ENCODE measurements at regions of chr6 and their contacts with region 1.

Region 1: DNA sequence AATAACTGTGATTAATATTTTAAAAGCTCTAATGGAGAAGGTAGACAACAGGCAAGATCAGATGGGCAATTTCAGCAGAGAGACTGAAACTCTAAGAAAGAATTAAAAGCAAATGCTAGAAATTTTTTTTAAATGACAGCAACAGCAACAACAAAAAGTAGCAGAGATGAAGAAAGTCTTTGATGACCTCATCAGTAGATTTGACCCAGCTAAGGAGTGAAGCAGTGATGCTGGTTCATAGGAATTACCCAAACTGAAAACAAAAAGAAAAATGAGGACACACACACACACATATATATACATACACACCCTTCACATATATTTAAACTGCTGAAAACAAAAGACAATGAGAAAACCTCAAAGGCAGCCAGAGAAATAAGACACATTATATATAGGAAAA is 197.6 kb upstream of the ARID1B start:
- DNase-seq: no peak
- ATAC-seq: no peak
- H3K4me3 Mint-ChIP-seq: no peak overlapping the region
- H3K27ac Mint-ChIP-seq: no peak overlapping the region
- H3K4me1 Mint-ChIP-seq: no peaks in the 10 kb centered on the region
- H3K27me3 Mint-ChIP-seq: no peaks in the 10 kb centered on the region
- CTCF ChIP-seq: no peak

Region 2: DNA sequence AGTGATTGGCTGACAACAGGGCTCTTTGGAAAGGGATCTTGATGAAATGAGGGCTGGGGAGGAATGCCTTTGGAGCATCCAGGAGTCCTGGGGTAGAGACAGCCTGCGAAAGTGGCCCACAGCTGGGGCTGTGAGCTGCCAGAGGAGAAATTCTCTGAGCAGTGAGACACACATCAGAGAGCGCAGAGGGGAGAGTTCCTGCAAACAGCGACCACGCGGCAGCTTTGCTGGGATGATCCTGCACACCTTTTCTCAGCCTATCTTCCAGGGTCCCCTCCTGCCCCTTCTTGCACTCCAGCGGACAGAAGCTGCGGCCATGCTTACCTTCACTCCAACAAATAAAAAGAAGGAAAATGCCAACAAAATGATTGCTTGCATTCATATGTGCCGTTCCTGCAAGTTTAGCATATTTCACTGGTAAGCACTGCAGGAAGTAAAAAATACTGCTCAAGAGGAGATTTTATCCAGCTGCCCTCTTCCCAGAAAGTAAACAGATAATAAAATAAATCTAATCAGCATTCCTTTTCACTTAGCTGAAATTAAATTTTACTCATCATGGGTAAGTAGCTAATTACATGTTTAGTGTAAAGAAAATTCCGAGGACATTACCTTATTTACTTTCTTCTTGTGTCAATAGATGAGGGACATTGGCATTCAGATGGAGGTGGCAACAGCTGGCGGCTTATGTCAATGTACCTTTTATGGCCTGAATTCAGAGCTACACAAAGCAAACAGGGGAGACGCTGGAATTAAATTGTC is 142.3 kb before region 1 on chr6:
- CTCF ChIA-PET with region 1: no interaction called
- POLR2A ChIA-PET with region 1: no interaction called
- intact Hi-C with region 1: no loop called
- DNase-seq: no peak
- ATAC-seq: no peak
- H3K4me3 Mint-ChIP-seq: no peak overlapping the region
- H3K27ac Mint-ChIP-seq: no peak overlapping the region
- H3K4me1 Mint-ChIP-seq: no peaks in the 10 kb centered on the region
- H3K27me3 Mint-ChIP-seq: peaks cover 3% of the 10 kb centered on the region
- CTCF ChIP-seq: no peak

Region 3: GRCh38 chr6:156627524-156627923 is 48.0 kb after region 1 on chr6:
- CTCF ChIA-PET with region 1: no interaction called
- POLR2A ChIA-PET with region 1: no interaction called
- intact Hi-C with region 1: loop called (anchors 10 kb)
- DNase-seq: no peak
- ATAC-seq: no peak
- H3K4me3 Mint-ChIP-seq: no peak overlapping the region
- H3K27ac Mint-ChIP-seq: no peak overlapping the region
- H3K4me1 Mint-ChIP-seq: no peaks in the 10 kb centered on the region
- H3K27me3 Mint-ChIP-seq: no peaks in the 10 kb centered on the region
- CTCF ChIP-seq: no peak

Region 4: GRCh38 chr6:156963712-156964700 is 384.4 kb after region 1 on chr6:
- CTCF ChIA-PET with region 1: no interaction called
- POLR2A ChIA-PET with region 1: no interaction called
- intact Hi-C with region 1: no loop called
- DNase-seq: no peak
- ATAC-seq: peak; percentile 18
- H3K4me3 Mint-ChIP-seq: no peak overlapping the region
- H3K27ac Mint-ChIP-seq: peak overlapping the region; percentile 37
- H3K4me1 Mint-ChIP-seq: peaks cover 53% of the 10 kb centered on the region
- H3K27me3 Mint-ChIP-seq: no peaks in the 10 kb centered on the region
- CTCF ChIP-seq: no peak